ENCODE measurements at regions of chr7 and their contacts with region 1.

Region 1: GRCh38 chr7:155598810-155599210 is 45.7 kb upstream of the RBM33 start:
- DNase-seq: peak; percentile 88
- H3K4me3 ChIP-seq: peak overlapping the region in 1 of 2 experiments; percentile 11; a peak in 1 of 4 replicates
- H3K27ac ChIP-seq: no peak overlapping the region
- H3K4me1 ChIP-seq: peaks cover 0 to 3% of the 10 kb centered on the region in 2 experiments; a peak in 1 of 4 replicates
- H3K27me3 ChIP-seq: peaks cover 27% of the 10 kb centered on the region; the same call in 1 of the 2 replicates
- CTCF ChIP-seq: peak; percentile 100
- EP300 ChIP-seq: no peak
- RAD21 ChIP-seq: peak; percentile 90

Region 2: DNA sequence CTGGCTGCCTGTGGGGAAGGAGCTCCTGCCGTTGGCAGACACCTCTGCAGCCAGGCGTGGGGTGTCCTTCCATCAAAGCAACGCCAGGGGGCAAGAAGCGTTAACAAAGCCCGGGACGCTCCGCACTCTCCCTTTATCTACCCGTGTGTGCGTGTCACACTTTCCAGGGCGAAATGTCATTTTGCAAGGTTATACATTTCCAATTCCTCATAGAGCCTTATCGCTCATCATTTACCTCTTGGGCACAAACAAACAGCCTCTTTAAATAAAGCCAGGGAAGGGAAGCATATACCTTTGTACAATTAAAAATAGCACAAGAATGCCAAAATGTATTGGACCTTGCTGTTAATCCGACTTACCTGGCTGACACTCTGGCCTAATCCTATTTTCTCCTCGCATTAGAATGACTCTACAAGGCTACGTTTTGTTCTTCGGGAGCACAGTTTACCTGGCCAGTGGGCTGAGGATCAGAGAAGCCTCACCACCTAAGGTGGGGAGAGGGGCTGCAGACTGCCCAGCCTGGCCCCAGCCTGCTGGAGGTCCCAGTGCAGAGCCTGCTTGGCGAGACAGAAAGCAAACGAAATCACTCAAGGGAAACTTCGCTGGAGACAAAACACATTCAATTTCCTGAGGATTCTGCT is 218.5 kb before region 1 on chr7:
- CTCF ChIA-PET with region 1: interaction called, 10 read pairs
- POLR2A ChIA-PET with region 1: no interaction called
- DNase-seq: peak; percentile 95
- H3K4me3 ChIP-seq: no peak overlapping the region
- H3K27ac ChIP-seq: no peak overlapping the region
- H3K4me1 ChIP-seq: peaks cover 3 to 4% of the 10 kb centered on the region in 2 experiments; a peak in 1 of 4 replicates
- H3K27me3 ChIP-seq: peaks cover 100% of the 10 kb centered on the region
- CTCF ChIP-seq: peak; percentile 84
- EP300 ChIP-seq: no peak
- RAD21 ChIP-seq: peak; percentile 70

Region 3: GRCh38 chr7:155404976-155405375 is 193.8 kb before region 1 on chr7:
- CTCF ChIA-PET with region 1: no interaction called
- POLR2A ChIA-PET with region 1: no interaction called
- DNase-seq: no peak
- H3K4me3 ChIP-seq: no peak overlapping the region
- H3K27ac ChIP-seq: no peak overlapping the region
- H3K4me1 ChIP-seq: no peaks in the 10 kb centered on the region
- H3K27me3 ChIP-seq: peaks cover 78% of the 10 kb centered on the region
- CTCF ChIP-seq: no peak
- EP300 ChIP-seq: no peak
- RAD21 ChIP-seq: no peak

Region 4: DNA sequence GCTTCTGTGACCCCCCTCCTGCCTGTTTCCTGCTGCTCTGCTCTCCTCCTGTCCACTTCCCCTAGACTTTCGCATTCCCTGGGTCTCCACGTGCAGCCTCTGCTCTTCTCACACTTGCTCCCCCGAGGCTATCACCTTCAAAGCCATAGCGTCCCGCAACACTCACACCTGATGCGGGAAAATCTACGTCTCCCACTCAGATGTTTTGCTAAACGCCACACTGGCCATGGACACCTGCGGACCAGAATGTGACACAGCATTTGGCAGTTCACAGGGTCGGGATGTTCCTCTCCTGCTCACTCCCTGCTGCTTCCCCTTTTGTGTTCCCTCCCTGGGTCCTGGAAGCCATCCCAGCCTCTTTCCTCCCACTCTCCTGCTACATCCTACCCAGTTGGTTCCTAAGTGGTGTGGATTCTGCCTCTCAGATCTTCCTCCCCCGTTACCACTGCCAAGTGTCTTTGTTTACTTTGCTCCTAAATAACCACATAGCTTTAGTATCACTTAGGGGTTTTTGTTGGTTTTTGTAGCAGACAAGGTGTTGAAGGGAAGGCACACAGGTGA is 11.9 kb after region 1 on chr7:
- CTCF ChIA-PET with region 1: interaction called, 42 read pairs
- POLR2A ChIA-PET with region 1: no interaction called
- DNase-seq: no peak
- H3K4me3 ChIP-seq: no peak overlapping the region
- H3K27ac ChIP-seq: no peak overlapping the region
- H3K4me1 ChIP-seq: no peaks in the 10 kb centered on the region
- H3K27me3 ChIP-seq: peaks cover 40% of the 10 kb centered on the region; the same call in 1 of the 2 replicates
- CTCF ChIP-seq: no peak
- EP300 ChIP-seq: no peak
- RAD21 ChIP-seq: no peak

Region 5: GRCh38 chr7:155660059-155660757 is 61.4 kb after region 1 on chr7:
- CTCF ChIA-PET with region 1: interaction called, 15 read pairs
- POLR2A ChIA-PET with region 1: no interaction called
- DNase-seq: no peak
- H3K4me3 ChIP-seq: no peak overlapping the region
- H3K27ac ChIP-seq: no peak overlapping the region
- H3K4me1 ChIP-seq: peaks cover 3% of the 10 kb centered on the region in 2 experiments; a peak in 3 of 4 replicates
- H3K27me3 ChIP-seq: no peaks in the 10 kb centered on the region
- CTCF ChIP-seq: no peak
- EP300 ChIP-seq: no peak
- RAD21 ChIP-seq: no peak

Region 6: DNA sequence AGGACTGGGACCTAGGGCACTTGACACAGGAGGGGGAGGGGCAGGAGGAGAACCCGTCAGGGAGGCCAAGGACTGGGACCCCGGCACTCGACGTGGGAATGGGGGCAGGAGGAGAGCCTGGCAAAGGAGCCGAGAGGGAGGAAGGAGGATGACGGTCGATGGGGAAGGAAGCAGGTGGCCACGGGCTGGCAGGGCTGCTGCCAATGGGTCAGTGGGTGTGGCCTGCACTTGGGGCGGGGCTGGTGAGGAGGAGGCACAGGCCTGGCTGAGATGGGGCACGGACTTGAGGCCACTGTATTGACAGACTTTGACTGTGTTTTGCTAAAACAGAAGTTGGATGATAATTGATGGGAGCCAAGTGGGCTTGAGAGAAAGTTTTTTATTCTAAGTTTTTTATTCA is 114.6 kb after region 1 on chr7:
- CTCF ChIA-PET with region 1: interaction called, 20 read pairs
- POLR2A ChIA-PET with region 1: no interaction called
- DNase-seq: peak; percentile 32
- H3K4me3 ChIP-seq: no peak overlapping the region
- H3K27ac ChIP-seq: no peak overlapping the region
- H3K4me1 ChIP-seq: no peaks in the 10 kb centered on the region
- H3K27me3 ChIP-seq: no peaks in the 10 kb centered on the region
- CTCF ChIP-seq: no peak
- EP300 ChIP-seq: no peak
- RAD21 ChIP-seq: no peak

Region 7: DNA sequence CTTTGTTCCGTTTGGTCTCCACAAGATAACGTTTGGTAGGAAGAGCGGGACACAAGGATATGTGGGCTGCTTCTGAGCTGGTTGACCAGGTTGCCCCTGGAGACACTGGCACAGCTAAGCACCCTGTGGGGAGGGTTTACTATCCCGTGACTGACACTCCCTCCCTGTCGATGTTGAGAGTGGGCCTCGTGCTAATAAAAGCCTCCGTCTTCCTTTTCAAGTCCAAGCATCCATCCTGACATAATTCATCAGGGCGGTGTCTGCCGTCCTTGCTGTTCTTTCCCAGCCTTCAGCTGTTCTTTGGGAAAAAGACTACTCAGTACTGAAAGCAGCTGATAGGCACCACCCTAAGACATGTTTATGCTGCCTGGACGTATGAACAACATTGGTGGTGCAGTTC is 163.8 kb after region 1 on chr7:
- CTCF ChIA-PET with region 1: interaction called, 470 read pairs
- POLR2A ChIA-PET with region 1: no interaction called
- DNase-seq: no peak
- H3K4me3 ChIP-seq: no peak overlapping the region
- H3K27ac ChIP-seq: no peak overlapping the region
- H3K4me1 ChIP-seq: no peaks in the 10 kb centered on the region; a peak in 1 of 4 replicates
- H3K27me3 ChIP-seq: no peaks in the 10 kb centered on the region
- CTCF ChIP-seq: no peak
- EP300 ChIP-seq: no peak
- RAD21 ChIP-seq: no peak

Measured in SK-N-SH (cell line).